Naive thymus-derived CD4-positive, alpha-beta T cell (primary cell): ENCODE measurements at regions of chr5 and their contacts with region 1.

Region 1: DNA sequence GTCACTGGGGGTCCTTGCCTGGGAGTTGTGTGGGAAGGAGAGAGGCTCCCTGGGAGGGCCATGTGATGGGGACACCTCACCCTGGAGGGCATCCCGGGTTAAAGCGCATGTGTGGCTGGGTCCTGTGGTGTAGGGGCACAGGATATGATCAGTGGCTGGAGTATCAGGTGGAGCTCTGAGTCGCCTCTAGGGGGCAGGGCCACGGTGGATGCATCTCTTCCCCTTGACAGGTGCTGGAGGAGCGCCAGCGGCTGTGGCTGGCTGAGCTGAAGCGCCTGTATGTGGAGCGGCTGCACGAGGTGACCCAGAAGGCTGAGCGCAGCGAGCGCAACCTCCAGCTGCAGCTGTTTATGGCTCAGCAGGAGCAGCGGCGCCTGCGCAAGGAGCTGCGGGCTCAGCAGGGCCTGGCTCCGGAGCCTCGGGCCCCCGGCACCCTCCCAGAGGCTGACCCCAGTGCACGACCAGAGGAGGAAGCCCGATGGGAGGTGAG is 7.6 kb downstream of the N4BP3 start:
- DNase-seq: peak; percentile 69 to 90 (median 87)
- ATAC-seq: peak; percentile 86
- H3K4me3 ChIP-seq: peak overlapping the region; percentile 50
- H3K4me3 Mint-ChIP-seq: peak overlapping the region; percentile 23 to 83 (median 69)
- H3K27ac ChIP-seq: peak overlapping the region; percentile 9
- H3K27ac Mint-ChIP-seq: peak overlapping the region in 3 of 9 donors; percentile 10 to 48 (median 29)
- H3K4me1 ChIP-seq: peaks cover 27 to 32% of the 10 kb centered on the region in 2 donors
- H3K4me1 Mint-ChIP-seq: peaks cover 15 to 30% (median 24%) of the 10 kb centered on the region in 7 donors
- H3K27me3 ChIP-seq: no peaks in the 10 kb centered on the region
- H3K27me3 Mint-ChIP-seq: peaks cover 0 to 8% (median 3%) of the 10 kb centered on the region in 5 donors

Region 2: GRCh38 chr5:178136990-178137389 is 16.1 kb after region 1 on chr5:
- CTCF ChIA-PET with region 1: interaction called, 14 read pairs
- POLR2A ChIA-PET with region 1: interaction called, 16 read pairs
- intact Hi-C with region 1: no loop called
- DNase-seq: no peak
- ATAC-seq: no peak
- H3K4me3 ChIP-seq: no peak overlapping the region
- H3K4me3 Mint-ChIP-seq: no peak overlapping the region
- H3K27ac ChIP-seq: no peak overlapping the region
- H3K27ac Mint-ChIP-seq: peak overlapping the region in 6 of 9 donors; percentile 1 to 91 (median 50)
- H3K4me1 ChIP-seq: no peaks in the 10 kb centered on the region
- H3K4me1 Mint-ChIP-seq: peaks cover 15 to 47% (median 37%) of the 10 kb centered on the region in 7 donors
- H3K27me3 ChIP-seq: no peaks in the 10 kb centered on the region
- H3K27me3 Mint-ChIP-seq: no peaks in the 10 kb centered on the region

Region 3: DNA sequence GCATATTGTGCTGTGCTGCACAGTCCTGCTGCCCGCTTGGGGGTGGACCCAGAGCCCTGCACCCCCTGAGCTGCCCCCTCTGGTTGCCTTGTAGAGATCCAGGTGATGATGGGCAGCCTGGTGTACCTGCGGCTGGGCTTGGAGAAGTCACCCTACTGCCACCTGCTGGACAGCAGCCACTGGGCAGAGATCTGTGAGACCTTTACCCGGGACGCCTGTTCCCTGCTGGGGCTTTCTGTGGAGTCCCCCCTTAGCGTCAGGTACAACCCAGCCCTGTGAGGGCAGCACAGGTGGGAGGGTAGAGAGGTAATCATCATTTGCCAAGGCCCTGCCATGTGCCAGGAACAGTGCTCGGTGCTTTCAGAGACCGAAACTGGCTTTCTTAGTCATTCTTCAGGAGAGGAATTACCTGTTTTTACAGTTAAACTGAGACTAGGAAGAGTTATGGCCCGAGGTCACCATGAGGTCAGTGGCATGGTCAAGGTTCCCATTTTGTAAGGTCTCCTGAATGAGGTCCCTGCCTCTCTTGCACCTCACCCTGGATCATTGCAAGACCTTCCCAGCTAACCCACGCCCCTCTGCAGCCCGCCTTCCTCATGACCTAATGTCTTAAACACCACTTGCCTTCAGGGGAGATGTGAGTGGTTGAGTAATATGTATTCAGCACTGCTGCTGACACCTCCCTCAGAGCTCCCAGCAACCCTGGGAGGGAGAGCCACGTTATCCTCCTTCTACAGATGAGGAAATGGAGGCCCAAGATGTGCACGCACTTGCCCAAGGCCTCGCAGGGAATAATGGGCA is 25.3 kb after region 1 on chr5:
- CTCF ChIA-PET with region 1: interaction called, 25 read pairs
- POLR2A ChIA-PET with region 1: interaction called, 14 read pairs
- intact Hi-C with region 1: loop called in 1 of 2 experiments (anchors 1 kb)
- DNase-seq: peak; percentile 51 to 76 (median 68)
- ATAC-seq: peak; percentile 90
- H3K4me3 ChIP-seq: no peak overlapping the region
- H3K4me3 Mint-ChIP-seq: no peak overlapping the region
- H3K27ac ChIP-seq: no peak overlapping the region
- H3K27ac Mint-ChIP-seq: peak overlapping the region in 4 of 9 donors; percentile 6 to 68 (median 51)
- H3K4me1 ChIP-seq: no peaks in the 10 kb centered on the region
- H3K4me1 Mint-ChIP-seq: peaks cover 4 to 28% (median 14%) of the 10 kb centered on the region in 7 donors
- H3K27me3 ChIP-seq: no peaks in the 10 kb centered on the region
- H3K27me3 Mint-ChIP-seq: no peaks in the 10 kb centered on the region

Region 4: GRCh38 chr5:178163772-178164735 is 43.1 kb after region 1 on chr5:
- CTCF ChIA-PET with region 1: interaction called, 4 read pairs
- POLR2A ChIA-PET with region 1: interaction called, 4 read pairs
- intact Hi-C with region 1: loop called in 1 of 2 experiments (anchors 1 kb)
- DNase-seq: peak; percentile 79 to 98 (median 92)
- ATAC-seq: peak; percentile 100
- H3K4me3 ChIP-seq: no peak overlapping the region
- H3K4me3 Mint-ChIP-seq: peak overlapping the region in 6 of 10 donors; percentile 27 to 69 (median 55)
- H3K27ac ChIP-seq: no peak overlapping the region
- H3K27ac Mint-ChIP-seq: no peak overlapping the region
- H3K4me1 ChIP-seq: peaks cover 0 to 3% of the 10 kb centered on the region in 2 donors
- H3K4me1 Mint-ChIP-seq: peaks cover 0 to 10% (median 8%) of the 10 kb centered on the region in 7 donors
- H3K27me3 ChIP-seq: no peaks in the 10 kb centered on the region
- H3K27me3 Mint-ChIP-seq: peaks cover 0 to 30% (median 9%) of the 10 kb centered on the region in 5 donors

Region 5: GRCh38 chr5:178486239-178486641 is 365.3 kb after region 1 on chr5:
- CTCF ChIA-PET with region 1: no interaction called
- POLR2A ChIA-PET with region 1: no interaction called
- intact Hi-C with region 1: no loop called
- DNase-seq: no peak
- ATAC-seq: no peak
- H3K4me3 ChIP-seq: no peak overlapping the region
- H3K4me3 Mint-ChIP-seq: no peak overlapping the region
- H3K27ac ChIP-seq: no peak overlapping the region
- H3K27ac Mint-ChIP-seq: peak overlapping the region in 1 of 9 donors; percentile 78
- H3K4me1 ChIP-seq: peaks cover 0 to 6% of the 10 kb centered on the region in 2 donors
- H3K4me1 Mint-ChIP-seq: peaks cover 0 to 11% (median 6%) of the 10 kb centered on the region in 7 donors
- H3K27me3 ChIP-seq: peaks cover 0 to 3% of the 10 kb centered on the region in 2 donors
- H3K27me3 Mint-ChIP-seq: peaks cover 0 to 11% (median 0%) of the 10 kb centered on the region in 5 donors